Right ventricle myocardium inferior (tissue), 1 donor: ENCODE measurements at regions of chr9 and their contacts with region 1.

Region 1: GRCh38 chr9:10059044-10059443 is 553.8 kb downstream of the PTPRD start:
- DNase-seq: no peak
- ATAC-seq: peak; percentile 42

Region 2: DNA sequence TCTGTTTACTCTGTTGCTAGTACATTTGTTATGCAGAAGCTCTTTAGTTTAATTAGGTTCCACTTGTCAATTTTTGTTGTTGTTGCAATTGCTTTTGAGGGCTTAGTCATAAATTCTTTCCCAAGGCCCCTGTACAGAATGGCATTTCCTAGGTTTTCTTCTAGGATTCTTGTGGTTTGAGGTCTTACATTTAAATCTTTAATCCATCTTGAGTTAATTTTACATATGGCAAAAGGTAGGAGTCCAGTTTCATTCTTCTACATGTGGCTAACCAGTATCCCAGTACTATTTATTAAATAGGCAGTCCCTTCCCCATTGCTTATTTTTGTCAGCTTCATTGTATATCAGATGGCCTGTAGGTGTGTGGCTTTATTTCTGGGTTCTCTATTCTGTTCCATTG is 238.6 kb before region 1 on chr9:
- intact Hi-C with region 1: no loop called
- DNase-seq: no peak
- ATAC-seq: no peak

Region 3: DNA sequence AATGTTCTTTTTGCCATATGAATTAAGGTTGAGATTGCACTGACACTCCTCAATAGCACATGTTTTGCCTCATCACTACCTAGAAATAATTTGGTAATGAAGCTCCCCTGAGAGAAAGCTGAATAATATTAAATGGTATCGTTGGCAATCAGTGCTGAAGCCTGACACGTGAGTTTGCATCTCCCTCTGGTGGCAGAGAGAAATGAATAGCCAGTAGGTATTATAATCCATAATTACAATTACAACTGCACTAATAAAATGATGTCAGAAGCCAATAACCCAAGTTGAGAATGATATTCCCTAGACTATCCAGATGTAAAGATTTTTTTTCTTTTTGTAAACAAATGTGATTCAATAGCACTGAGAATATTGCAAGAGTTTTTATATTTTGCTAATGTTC is 146.6 kb before region 1 on chr9:
- intact Hi-C with region 1: no loop called
- DNase-seq: no peak
- ATAC-seq: no peak

Region 4: DNA sequence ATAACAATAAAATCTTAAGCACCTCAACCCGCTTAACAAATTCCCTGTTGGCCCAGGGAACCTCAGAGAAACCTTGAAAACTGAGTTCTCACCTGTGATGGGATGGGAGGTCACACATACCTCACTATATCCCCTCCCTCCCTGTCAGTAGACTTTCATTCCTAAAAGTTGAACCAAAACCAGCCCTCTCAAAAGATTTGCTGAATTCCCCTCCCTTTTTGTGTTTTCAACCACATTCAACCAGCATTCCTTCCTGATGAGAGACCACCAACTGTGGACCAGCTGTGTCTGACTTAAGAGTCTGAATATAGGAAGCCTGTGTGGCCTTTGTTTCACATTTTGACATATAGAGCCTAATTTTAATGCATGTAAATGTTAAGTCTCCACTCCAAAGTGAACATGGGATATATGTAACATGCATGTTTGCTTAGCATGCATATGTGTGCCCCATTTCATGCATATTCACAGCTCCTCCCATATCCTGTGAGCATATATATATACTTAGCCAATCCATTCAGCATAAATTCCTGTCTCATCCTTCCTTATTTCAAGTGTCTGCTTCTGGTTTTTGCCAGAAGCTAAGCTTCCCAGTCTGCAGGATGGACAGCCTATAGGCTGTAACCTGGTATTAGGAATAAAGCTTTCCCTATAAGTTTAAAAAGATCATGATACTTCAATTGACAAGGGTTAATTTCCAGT is 50.8 kb before region 1 on chr9:
- intact Hi-C with region 1: no loop called
- DNase-seq: no peak
- ATAC-seq: no peak

Region 5: GRCh38 chr9:10268531-10269485 is 209.8 kb after region 1 on chr9:
- intact Hi-C with region 1: loop called (anchors 1 kb)
- DNase-seq: no peak
- ATAC-seq: peak; percentile 68

Region 6: GRCh38 chr9:10331157-10331556 is 272.1 kb after region 1 on chr9:
- intact Hi-C with region 1: no loop called
- DNase-seq: no peak
- ATAC-seq: no peak